Sciatic nerve (tissue), 2 donors: ENCODE measurements at regions of chr6 and their contacts with region 1.

Region 1: DNA sequence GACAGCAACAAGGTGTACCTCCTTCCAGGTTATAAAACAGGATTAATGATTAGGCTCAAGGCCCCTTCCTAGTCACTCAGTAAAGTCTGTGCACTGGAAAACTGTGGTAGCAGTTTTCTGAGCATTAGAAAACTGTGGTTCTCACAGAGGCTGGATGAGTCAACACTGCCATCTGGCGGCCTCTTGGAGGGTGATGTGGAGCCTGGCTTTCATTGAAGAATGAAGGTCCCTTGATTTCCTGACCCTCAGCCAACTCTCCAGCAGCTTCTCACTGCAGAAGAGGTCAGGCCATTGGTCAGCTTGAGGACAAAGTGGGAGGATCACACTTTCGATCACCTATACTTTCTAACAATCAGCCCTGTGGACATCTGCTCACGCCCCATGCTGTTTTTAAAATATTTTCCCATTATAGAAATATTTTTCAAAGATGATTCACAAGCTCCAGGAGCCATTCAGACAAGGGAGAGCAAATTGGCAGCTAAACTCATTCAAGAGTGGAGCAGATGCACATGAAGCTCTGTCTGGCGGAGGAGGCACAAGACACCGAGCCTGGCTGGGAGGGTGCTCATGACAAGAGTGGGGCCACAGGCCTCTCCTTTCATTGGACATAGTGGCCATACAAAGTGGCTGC is 23.2 kb downstream of the PSMB1 start:
- DNase-seq: peak; percentile 83
- ATAC-seq: peak; percentile 82

Region 2: GRCh38 chr6:169568314-169569087 is 961.5 kb before region 1 on chr6:
- intact Hi-C with region 1: no loop called
- DNase-seq: no peak
- ATAC-seq: no peak

Region 3: GRCh38 chr6:169789982-169790927 is 739.7 kb before region 1 on chr6:
- intact Hi-C with region 1: loop called (anchors 10 kb)
- DNase-seq: peak; percentile 84
- ATAC-seq: peak; percentile 98

Region 4: GRCh38 chr6:170003027-170003426 is 526.9 kb before region 1 on chr6:
- intact Hi-C with region 1: no loop called
- DNase-seq: no peak
- ATAC-seq: no peak

Region 5: GRCh38 chr6:170200458-170200891 is 329.5 kb before region 1 on chr6:
- intact Hi-C with region 1: no loop called
- DNase-seq: no peak
- ATAC-seq: no peak